B cell (primary cell): ENCODE measurements at regions of chr16 and their contacts with region 1.

Region 1: GRCh38 chr16:11833951-11834695 is 17.2 kb downstream of the RSL1D1 start:
- DNase-seq: no peak
- ATAC-seq: no peak
- H3K4me3 ChIP-seq: no peak overlapping the region
- H3K4me3 Mint-ChIP-seq: no peak overlapping the region
- H3K27ac ChIP-seq: no peak overlapping the region
- H3K27ac Mint-ChIP-seq: no peak overlapping the region
- H3K4me1 ChIP-seq: no peaks in the 10 kb centered on the region
- H3K4me1 Mint-ChIP-seq: no peaks in the 10 kb centered on the region
- H3K27me3 ChIP-seq: no peaks in the 10 kb centered on the region
- H3K27me3 Mint-ChIP-seq: no peaks in the 10 kb centered on the region
- CTCF ChIP-seq: no peak

Region 2: GRCh38 chr16:12050361-12050760 is 216.2 kb after region 1 on chr16:
- CTCF ChIA-PET with region 1: no interaction called
- POLR2A ChIA-PET with region 1: interaction called, 10 read pairs
- intact Hi-C with region 1: no loop called
- DNase-seq: no peak
- ATAC-seq: no peak
- H3K4me3 ChIP-seq: no peak overlapping the region
- H3K4me3 Mint-ChIP-seq: no peak overlapping the region
- H3K27ac ChIP-seq: no peak overlapping the region
- H3K27ac Mint-ChIP-seq: no peak overlapping the region
- H3K4me1 ChIP-seq: peaks cover 8 to 19% of the 10 kb centered on the region in 2 donors
- H3K4me1 Mint-ChIP-seq: peaks cover 22% of the 10 kb centered on the region
- H3K27me3 ChIP-seq: no peaks in the 10 kb centered on the region
- H3K27me3 Mint-ChIP-seq: no peaks in the 10 kb centered on the region
- CTCF ChIP-seq: no peak